WTC11 (cell line): ENCODE measurements at regions of chr17 and their contacts with region 1.

Region 1: GRCh38 chr17:1365445-1366039 is 34.5 kb downstream of the YWHAE start:
- DNase-seq: peak; percentile 53
- ATAC-seq: peak; percentile 74
- H3K4me3 Mint-ChIP-seq: no peak overlapping the region
- H3K27ac Mint-ChIP-seq: peak overlapping the region; percentile 77
- H3K4me1 Mint-ChIP-seq: peaks cover 62% of the 10 kb centered on the region
- H3K27me3 Mint-ChIP-seq: no peaks in the 10 kb centered on the region
- CTCF ChIP-seq: peak; percentile 68

Region 2: DNA sequence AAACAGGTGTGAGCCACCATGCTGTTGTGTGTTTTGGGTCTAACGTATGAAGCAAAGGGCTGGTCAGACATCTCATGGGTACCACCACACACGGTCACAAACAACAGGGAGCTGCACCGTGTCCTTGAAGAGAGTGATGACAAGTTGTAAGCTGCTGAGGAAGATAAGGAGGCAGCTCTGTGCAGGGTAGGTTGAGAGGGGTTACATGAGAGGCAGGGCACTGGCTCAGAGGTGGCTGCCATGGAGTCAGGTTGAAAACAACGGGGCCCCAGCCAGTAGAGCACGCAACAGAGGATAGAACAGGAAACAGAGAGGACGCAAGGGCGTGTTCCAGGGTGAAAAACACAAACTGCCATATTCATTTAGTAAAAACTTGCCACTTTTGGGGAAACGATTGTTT is 33.8 kb before region 1 on chr17:
- CTCF ChIA-PET with region 1: interaction called, 17 read pairs
- POLR2A ChIA-PET with region 1: no interaction called
- DNase-seq: peak; percentile 2
- ATAC-seq: no peak
- H3K4me3 Mint-ChIP-seq: no peak overlapping the region
- H3K27ac Mint-ChIP-seq: peak overlapping the region; percentile 34; the same call in 1 of the 2 replicates
- H3K4me1 Mint-ChIP-seq: no peaks in the 10 kb centered on the region
- H3K27me3 Mint-ChIP-seq: no peaks in the 10 kb centered on the region; the same call in 1 of the 2 replicates
- CTCF ChIP-seq: no peak

Region 3: DNA sequence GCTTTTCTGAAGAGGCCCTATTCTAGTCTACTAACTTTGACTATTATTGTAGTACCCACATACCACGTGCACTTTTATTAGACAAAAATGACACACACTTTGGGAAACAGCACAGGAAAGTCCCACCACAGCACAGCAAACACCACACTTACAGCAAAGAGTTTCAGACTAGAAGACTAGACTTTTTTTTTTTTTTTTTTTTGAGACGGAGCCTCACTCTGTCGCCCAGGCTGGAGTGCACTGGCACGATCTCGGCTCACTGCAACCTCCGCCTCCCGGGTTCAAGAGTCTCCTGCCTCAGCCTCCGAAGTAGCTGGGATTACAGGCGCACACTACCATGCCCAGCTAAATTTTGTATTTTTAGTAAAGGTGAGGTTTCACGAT is 14.4 kb after region 1 on chr17:
- CTCF ChIA-PET with region 1: interaction called, 102 read pairs
- POLR2A ChIA-PET with region 1: no interaction called
- DNase-seq: no peak
- ATAC-seq: no peak
- H3K4me3 Mint-ChIP-seq: no peak overlapping the region
- H3K27ac Mint-ChIP-seq: peak overlapping the region; percentile 86
- H3K4me1 Mint-ChIP-seq: peaks cover 69% of the 10 kb centered on the region
- H3K27me3 Mint-ChIP-seq: no peaks in the 10 kb centered on the region
- CTCF ChIP-seq: no peak

Region 4: DNA sequence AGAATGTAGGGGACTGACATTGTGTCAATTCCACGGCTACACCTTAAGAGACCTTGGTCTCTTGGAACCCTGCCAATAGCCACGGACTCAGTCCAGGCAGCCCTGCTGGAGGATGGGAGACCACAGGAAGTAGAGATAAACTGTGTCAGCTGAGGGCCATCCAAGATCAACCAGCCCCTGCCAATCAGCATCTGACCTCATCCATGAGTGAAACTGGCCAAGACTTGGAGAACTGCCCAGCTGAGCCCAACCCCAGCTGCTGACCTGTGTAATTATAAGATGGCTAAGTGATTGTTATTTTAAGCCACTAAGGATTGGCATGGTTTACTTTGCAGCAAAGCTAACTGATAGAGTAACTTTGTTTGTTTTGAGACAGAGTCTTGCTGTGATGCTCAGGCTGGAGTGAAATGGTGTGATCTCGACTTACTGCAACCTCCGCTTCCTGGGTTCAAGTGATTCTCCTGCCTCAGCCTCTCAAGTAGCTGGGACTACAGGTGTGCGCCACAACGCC is 47.8 kb after region 1 on chr17:
- CTCF ChIA-PET with region 1: interaction called, 10 read pairs
- POLR2A ChIA-PET with region 1: no interaction called
- DNase-seq: no peak
- ATAC-seq: peak; percentile 28
- H3K4me3 Mint-ChIP-seq: no peak overlapping the region
- H3K27ac Mint-ChIP-seq: no peak overlapping the region
- H3K4me1 Mint-ChIP-seq: no peaks in the 10 kb centered on the region
- H3K27me3 Mint-ChIP-seq: no peaks in the 10 kb centered on the region; the same call in 1 of the 2 replicates
- CTCF ChIP-seq: no peak

Region 5: DNA sequence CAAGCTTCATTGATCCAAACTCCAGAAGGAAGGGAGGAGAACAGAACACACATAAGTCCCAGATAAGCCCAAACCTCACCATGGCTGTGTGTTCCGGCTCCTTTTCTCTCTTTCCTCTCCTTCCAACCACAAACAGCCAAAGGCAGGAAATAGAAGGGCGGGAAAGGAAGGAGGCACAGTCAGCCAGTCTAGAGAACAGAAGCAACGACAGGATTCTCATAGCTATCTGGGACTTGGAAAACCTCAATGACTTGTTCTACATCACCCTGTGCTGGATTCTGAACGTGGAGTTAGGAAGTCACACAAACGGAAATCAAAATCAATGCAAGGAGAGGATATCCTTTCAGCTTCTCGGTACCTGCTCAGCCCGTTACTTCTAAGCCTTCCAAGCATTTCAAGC is 81.5 kb after region 1 on chr17:
- CTCF ChIA-PET with region 1: interaction called, 10 read pairs
- POLR2A ChIA-PET with region 1: interaction called, 7 read pairs
- DNase-seq: no peak
- ATAC-seq: no peak
- H3K4me3 Mint-ChIP-seq: no peak overlapping the region
- H3K27ac Mint-ChIP-seq: no peak overlapping the region
- H3K4me1 Mint-ChIP-seq: 0 out of 2 replicates have a peak, but pooled peaks cover 4% of the 10 kb centered on the region
- H3K27me3 Mint-ChIP-seq: no peaks in the 10 kb centered on the region
- CTCF ChIP-seq: no peak

Region 6: DNA sequence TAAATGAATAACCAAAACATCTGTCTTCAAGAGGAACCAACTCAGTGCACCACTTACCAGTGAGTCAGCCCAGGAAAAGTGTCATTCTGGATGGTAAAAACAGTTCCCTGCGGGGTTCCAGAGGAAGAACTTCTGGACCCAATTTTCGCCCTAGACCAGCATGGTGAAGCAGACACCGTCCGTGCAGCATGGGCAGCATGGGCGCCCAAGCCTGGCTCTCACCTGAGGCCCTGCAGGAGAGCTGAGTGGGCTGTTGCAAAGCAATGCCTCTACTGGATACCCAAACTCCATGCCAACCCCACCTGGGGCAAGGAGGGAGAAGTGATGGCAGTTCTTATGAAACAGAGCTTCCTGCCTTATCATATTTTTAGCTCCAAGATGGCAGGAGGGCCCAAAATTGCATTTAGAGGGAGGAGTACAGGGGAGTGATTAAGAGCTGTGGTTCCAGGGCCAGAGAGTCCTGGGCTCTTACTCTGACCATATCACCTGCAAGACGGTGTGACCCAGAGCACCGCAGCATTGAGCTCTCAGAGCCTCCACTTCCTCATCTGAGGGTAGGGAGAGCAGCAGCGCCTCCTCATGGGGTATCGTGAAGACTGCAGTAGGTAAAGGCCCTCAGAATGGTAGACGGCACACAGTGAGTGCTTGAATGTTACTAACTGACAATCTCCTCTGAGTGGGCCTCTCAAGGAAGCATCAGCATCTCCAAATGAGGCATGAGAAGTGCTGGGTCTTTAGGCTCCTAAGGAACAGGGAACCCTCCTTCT is 167.5 kb after region 1 on chr17:
- CTCF ChIA-PET with region 1: interaction called, 12 read pairs
- POLR2A ChIA-PET with region 1: no interaction called
- DNase-seq: peak; percentile 75
- ATAC-seq: peak; percentile 97
- H3K4me3 Mint-ChIP-seq: no peak overlapping the region
- H3K27ac Mint-ChIP-seq: no peak overlapping the region
- H3K4me1 Mint-ChIP-seq: no peaks in the 10 kb centered on the region
- H3K27me3 Mint-ChIP-seq: no peaks in the 10 kb centered on the region
- CTCF ChIP-seq: peak; percentile 37; the same call in 1 of the 2 replicates